ENCODE measurements at regions of chr20 and their contacts with region 1.

Region 1: GRCh38 chr20:53664113-53664850 is 70.6 kb upstream of the ZNF217 start:
- DNase-seq: no peak
- H3K4me3 ChIP-seq: no peak overlapping the region
- H3K27me3 ChIP-seq: no peaks in the 10 kb centered on the region
- CTCF ChIP-seq: no peak

Region 2: DNA sequence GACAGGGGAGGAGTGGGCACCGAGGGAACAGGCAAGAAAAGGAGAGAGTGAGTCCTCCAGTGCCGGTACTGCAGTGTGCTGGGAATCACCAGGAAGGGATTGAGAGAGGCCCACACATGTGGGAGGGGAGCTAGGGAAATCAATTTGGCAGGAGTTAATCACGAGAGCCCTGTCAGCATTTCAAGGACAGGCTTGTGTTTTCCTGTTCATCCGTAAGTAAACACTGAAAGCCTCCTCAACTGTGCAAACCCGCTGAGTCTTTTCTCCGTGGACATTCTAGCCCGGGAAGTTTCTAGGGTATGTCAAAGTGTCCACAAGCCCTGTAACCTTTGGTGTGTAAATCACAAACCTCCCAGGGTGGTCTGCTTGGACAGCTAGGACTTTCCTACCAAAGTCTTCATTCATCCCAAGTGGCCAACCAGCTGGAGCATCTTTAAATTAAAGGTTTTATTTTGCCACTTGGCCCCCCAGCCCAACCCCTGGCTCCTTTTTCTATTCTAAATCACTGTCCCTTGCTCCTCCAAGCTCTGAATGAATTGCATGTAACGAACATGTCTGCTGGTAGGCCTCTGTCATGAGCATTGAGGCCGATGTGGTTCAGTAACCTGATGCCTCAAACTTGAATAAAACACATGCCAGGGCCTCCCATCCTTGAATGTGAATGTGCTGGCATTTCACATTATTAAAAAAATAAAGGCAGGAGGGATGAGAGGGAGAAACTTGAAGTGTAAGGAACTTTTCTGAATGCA is 219.7 kb before region 1 on chr20:
- CTCF ChIA-PET with region 1: no interaction called
- POLR2A ChIA-PET with region 1: no interaction called
- DNase-seq: no peak
- H3K4me3 ChIP-seq: no peak overlapping the region
- H3K27me3 ChIP-seq: no peaks in the 10 kb centered on the region
- CTCF ChIP-seq: no peak

Region 3: DNA sequence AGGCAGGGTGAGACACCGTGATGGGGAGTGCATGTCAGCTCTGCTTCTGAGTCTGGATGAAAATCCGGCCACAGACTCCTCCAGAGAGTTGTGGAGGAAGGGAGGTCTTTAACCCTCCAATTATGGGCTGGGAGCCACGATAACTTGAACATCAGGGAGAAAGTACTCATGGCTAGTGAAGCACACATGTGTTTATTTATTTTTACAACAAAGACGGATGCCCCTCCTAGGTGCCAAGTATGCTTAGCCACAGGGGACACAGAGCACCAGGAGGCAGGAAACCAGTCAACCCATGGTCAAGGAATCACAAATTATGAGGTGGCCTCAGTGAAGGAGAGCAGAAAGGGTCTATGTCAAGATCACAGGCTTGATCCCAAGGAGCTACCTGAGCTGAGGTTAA is 124.8 kb before region 1 on chr20:
- CTCF ChIA-PET with region 1: no interaction called
- POLR2A ChIA-PET with region 1: no interaction called
- DNase-seq: no peak
- H3K4me3 ChIP-seq: no peak overlapping the region
- H3K27me3 ChIP-seq: no peaks in the 10 kb centered on the region
- CTCF ChIP-seq: no peak

Region 4: DNA sequence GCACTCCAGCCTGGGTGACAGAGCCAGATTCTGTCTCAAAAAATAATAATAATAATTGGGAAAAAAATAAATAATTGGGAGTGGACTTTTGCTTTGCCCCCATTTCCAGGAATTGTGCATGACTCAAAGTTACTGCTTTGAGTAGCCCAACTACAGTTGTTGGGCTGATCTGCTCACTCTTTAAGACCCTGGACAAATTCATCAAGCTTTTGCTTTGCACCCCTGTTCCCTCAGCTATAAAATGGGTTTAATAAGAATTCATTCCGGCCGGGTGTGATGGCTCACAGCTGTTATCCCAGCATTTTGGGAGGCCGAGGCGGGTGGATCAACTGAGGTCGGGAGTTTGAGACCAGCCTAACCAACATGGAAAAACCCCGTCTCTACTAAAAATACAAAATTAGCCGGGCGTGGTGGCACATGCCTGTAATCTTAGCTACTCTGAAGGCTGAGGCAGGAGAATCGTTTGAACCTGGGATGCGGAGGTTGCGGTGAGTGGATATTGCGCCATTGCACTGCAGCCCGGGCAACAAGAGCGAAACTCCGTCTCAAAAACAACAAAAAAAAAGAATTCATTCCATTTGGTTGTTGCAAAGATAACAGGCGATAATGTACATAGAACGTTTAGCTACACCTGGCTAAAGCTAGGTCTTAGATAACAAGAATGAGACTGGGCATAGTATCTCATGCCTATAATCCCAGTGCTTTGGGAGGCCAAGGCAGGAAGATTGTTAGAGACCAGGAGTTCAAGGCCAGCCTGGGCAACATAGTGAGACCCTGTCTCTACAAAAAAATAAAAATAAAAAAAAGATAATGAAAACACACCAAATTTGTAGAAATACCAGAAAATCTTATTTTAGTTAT is 17.3 kb after region 1 on chr20:
- CTCF ChIA-PET with region 1: interaction called, 3 read pairs
- POLR2A ChIA-PET with region 1: interaction called, 17 read pairs
- DNase-seq: no peak
- H3K4me3 ChIP-seq: no peak overlapping the region
- H3K27me3 ChIP-seq: no peaks in the 10 kb centered on the region
- CTCF ChIP-seq: no peak